K562 (cell line): ENCODE measurements at regions of chr4 and their contacts with region 1.

Region 1: GRCh38 chr4:107736924-107737448 is 17.0 kb upstream of the PAPSS1 start:
- DNase-seq: peak; percentile 61 to 69 (median 66)
- ATAC-seq: peak; percentile 79
- H3K4me3 ChIP-seq: no peak overlapping the region
- H3K27ac ChIP-seq: no peak overlapping the region
- H3K4me1 ChIP-seq: peaks cover 0 to 8% of the 10 kb centered on the region in 2 experiments; a peak in 3 of 5 replicates
- H3K27me3 ChIP-seq: no peaks in the 10 kb centered on the region
- CTCF ChIP-seq: peak; percentile 66 to 85 (median 85)
- EP300 ChIP-seq: no peak
- POLR2A ChIP-seq: no peak
- RAD21 ChIP-seq: peak; percentile 64 to 80

Region 2: DNA sequence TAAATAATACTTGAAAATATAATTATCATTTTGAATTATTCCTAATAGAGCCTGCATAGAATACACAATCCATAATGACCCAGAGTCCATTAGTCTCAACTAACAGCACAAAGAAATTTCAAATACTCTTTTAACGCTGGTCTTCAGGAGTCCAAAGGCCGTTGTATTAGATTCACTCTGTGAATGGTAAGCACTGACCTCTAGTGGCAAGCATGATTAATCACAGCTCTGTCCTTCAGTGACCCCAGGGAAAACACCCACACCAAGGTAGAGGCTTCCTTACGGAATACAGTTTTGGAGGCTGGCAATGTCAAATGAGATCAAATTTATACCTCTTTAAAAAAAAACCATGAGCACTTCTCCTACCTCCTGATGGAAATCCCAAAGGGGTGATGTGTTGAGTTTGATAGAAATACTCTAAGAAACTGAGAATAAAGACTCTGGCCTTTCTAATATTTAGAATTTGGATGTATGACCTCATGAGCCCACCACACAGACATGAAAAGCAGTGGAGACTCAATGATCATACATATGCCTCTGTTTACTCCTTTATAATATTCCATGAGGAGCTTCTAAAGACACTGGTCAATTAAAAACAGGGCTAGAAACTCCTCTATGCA is 553.7 kb before region 1 on chr4:
- CTCF ChIA-PET with region 1: no interaction called
- POLR2A ChIA-PET with region 1: no interaction called
- in situ Hi-C with region 1: no loop called
- intact Hi-C with region 1: loop called (anchors 10 kb)
- DNase-seq: peak; percentile 27 to 51 (median 48)
- ATAC-seq: peak; percentile 93
- H3K4me3 ChIP-seq: no peak overlapping the region
- H3K27ac ChIP-seq: no peak overlapping the region
- H3K4me1 ChIP-seq: no peaks in the 10 kb centered on the region
- H3K27me3 ChIP-seq: no peaks in the 10 kb centered on the region
- CTCF ChIP-seq: peak; percentile 49 to 58 (median 54)
- EP300 ChIP-seq: no peak
- POLR2A ChIP-seq: no peak
- RAD21 ChIP-seq: peak; percentile 30 to 51; a peak in 3 of 4 replicates

Region 3: DNA sequence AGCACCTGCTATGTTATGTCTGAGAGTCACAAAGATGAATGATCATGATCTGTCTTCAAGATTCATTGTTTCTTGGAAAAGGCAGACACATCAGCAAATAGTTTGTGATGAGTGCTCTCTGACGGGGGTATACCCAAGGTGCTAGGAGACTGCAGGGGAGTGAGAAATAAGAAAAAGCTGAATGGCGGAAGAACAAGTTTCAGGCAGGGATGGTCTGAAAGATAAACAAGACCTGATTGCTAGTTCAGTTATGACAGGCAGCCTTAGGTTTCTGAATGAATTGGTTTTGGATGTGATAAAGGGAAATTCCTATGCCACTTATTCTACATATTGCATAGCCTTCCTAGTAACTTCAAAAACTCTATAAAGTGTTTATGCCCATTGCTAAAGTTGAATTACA is 373.9 kb before region 1 on chr4:
- CTCF ChIA-PET with region 1: no interaction called
- POLR2A ChIA-PET with region 1: no interaction called
- in situ Hi-C with region 1: no loop called
- intact Hi-C with region 1: loop called (anchors 10 kb)
- DNase-seq: no peak
- ATAC-seq: no peak
- H3K4me3 ChIP-seq: no peak overlapping the region
- H3K27ac ChIP-seq: no peak overlapping the region
- H3K4me1 ChIP-seq: no peaks in the 10 kb centered on the region
- H3K27me3 ChIP-seq: no peaks in the 10 kb centered on the region
- CTCF ChIP-seq: no peak
- EP300 ChIP-seq: no peak
- POLR2A ChIP-seq: no peak
- RAD21 ChIP-seq: no peak

Region 4: DNA sequence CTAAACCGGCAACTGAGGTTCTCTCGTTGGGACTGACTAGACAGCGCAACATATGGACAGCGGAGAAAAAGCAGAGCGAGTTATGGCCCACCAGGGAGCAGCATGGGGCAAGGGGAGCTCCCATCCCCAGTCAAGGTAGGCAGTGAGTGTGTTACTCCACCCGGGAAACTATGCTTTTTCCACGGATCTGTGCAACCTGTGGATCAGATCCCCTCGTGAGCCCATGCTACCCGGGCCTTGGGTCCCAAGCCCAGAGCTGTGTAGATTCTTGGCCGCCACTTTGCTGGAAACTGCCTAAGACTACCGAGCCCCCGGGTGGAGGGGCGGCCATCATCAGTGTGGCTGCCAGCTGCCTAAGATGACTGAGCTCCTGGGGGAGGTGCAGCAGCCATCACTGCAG is 157.9 kb before region 1 on chr4:
- CTCF ChIA-PET with region 1: interaction called, 4 read pairs
- POLR2A ChIA-PET with region 1: no interaction called
- in situ Hi-C with region 1: loop called (anchors 5 kb)
- intact Hi-C with region 1: loop called (anchors 1 kb)
- DNase-seq: peak in 2 of 4 experiments; percentile 25 to 26
- ATAC-seq: peak; percentile 95
- H3K4me3 ChIP-seq: no peak overlapping the region
- H3K27ac ChIP-seq: no peak overlapping the region
- H3K4me1 ChIP-seq: peaks cover 0 to 3% of the 10 kb centered on the region in 2 experiments; a peak in 1 of 5 replicates
- H3K27me3 ChIP-seq: peaks cover 0 to 5% of the 10 kb centered on the region in 2 experiments; a peak in 2 of 5 replicates
- CTCF ChIP-seq: peak; percentile 51 to 79 (median 59)
- EP300 ChIP-seq: no peak
- POLR2A ChIP-seq: no peak
- RAD21 ChIP-seq: peak; percentile 67 to 84

Region 5: GRCh38 chr4:107654694-107655093 is 82.3 kb before region 1 on chr4:
- CTCF ChIA-PET with region 1: interaction called, 4 read pairs
- POLR2A ChIA-PET with region 1: no interaction called
- in situ Hi-C with region 1: no loop called
- intact Hi-C with region 1: loop called (anchors 1 kb)
- DNase-seq: peak in 1 of 4 experiments; percentile 21
- ATAC-seq: peak; percentile 84
- H3K4me3 ChIP-seq: no peak overlapping the region
- H3K27ac ChIP-seq: no peak overlapping the region
- H3K4me1 ChIP-seq: no peaks in the 10 kb centered on the region
- H3K27me3 ChIP-seq: no peaks in the 10 kb centered on the region
- CTCF ChIP-seq: peak; percentile 13 to 30 (median 30); a peak in 1 of 6 replicates
- EP300 ChIP-seq: no peak
- POLR2A ChIP-seq: no peak
- RAD21 ChIP-seq: peak in 1 of 2 experiments; percentile 46; a peak in 2 of 4 replicates

Region 6: GRCh38 chr4:107747748-107748486 is 10.9 kb after region 1 on chr4:
- CTCF ChIA-PET with region 1: no interaction called
- POLR2A ChIA-PET with region 1: no interaction called
- in situ Hi-C with region 1: no loop called
- intact Hi-C with region 1: no loop called
- DNase-seq: no peak
- ATAC-seq: no peak
- H3K4me3 ChIP-seq: no peak overlapping the region
- H3K27ac ChIP-seq: no peak overlapping the region
- H3K4me1 ChIP-seq: no peaks in the 10 kb centered on the region
- H3K27me3 ChIP-seq: no peaks in the 10 kb centered on the region; a peak in 1 of 5 replicates
- CTCF ChIP-seq: no peak
- EP300 ChIP-seq: no peak
- POLR2A ChIP-seq: no peak
- RAD21 ChIP-seq: no peak

Region 7: GRCh38 chr4:107757864-107758476 is 21.0 kb after region 1 on chr4:
- CTCF ChIA-PET with region 1: no interaction called
- POLR2A ChIA-PET with region 1: no interaction called
- in situ Hi-C with region 1: no loop called
- intact Hi-C with region 1: no loop called
- DNase-seq: peak in 3 of 4 experiments; percentile 15 to 23 (median 18)
- ATAC-seq: 0 out of 3 replicates have a peak, but pooled peaks have one; percentile 36
- H3K4me3 ChIP-seq: no peak overlapping the region
- H3K27ac ChIP-seq: no peak overlapping the region
- H3K4me1 ChIP-seq: no peaks in the 10 kb centered on the region
- H3K27me3 ChIP-seq: no peaks in the 10 kb centered on the region
- CTCF ChIP-seq: peak in 2 of 3 experiments; percentile 28 to 47; a peak in 3 of 6 replicates
- EP300 ChIP-seq: no peak
- POLR2A ChIP-seq: no peak
- RAD21 ChIP-seq: peak; percentile 37 to 54; a peak in 3 of 4 replicates